ENCODE measurements at regions of chr11 and their contacts with region 1.

Region 1: GRCh38 chr11:36292311-36292722 is 3.1 kb upstream of the COMMD9 start:
- DNase-seq: no peak
- ATAC-seq: no peak
- H3K4me3 ChIP-seq: no peak overlapping the region
- H3K27ac ChIP-seq: no peak overlapping the region
- H3K4me1 ChIP-seq: no peaks in the 10 kb centered on the region
- H3K27me3 ChIP-seq: no peaks in the 10 kb centered on the region

Region 2: DNA sequence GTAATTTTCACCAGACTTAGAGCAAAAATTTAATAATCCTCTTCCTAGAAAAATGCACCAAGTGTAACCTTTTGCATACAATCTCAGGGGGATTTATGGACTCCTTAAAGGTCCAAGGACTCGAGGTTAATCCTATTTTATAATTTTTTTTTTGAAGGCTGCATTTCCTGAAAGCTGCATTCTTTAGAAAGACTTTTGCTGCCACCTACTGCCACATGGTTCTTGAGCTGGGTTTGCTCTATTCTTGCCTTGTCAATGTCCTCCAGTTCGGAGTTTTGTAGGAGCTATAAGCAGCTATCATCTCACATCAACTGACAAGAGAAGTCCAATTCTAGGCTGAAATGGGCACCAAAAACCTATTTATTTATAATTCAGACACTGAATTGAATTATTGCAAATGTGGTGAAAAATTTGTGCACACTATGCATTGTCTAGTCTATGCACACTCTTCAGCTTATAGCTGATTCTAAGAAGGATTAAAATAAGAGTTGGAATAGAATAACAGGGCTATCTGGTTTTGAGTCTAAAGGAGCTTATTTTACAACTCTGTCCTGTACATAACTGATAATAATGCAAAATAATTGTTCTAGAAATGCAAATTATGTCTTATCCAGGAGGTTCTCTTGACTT is 186.5 kb after region 1 on chr11:
- intact Hi-C with region 1: loop called (anchors 5 to 10 kb)
- DNase-seq: no peak
- ATAC-seq: peak; percentile 80
- H3K4me3 ChIP-seq: no peak overlapping the region
- H3K27ac ChIP-seq: no peak overlapping the region
- H3K4me1 ChIP-seq: no peaks in the 10 kb centered on the region
- H3K27me3 ChIP-seq: no peaks in the 10 kb centered on the region

Region 3: GRCh38 chr11:36492724-36493304 is 200.5 kb after region 1 on chr11:
- intact Hi-C with region 1: loop called in 1 of 2 experiments (anchors 5 kb)
- DNase-seq: no peak
- ATAC-seq: no peak
- H3K4me3 ChIP-seq: no peak overlapping the region
- H3K27ac ChIP-seq: no peak overlapping the region
- H3K4me1 ChIP-seq: no peaks in the 10 kb centered on the region
- H3K27me3 ChIP-seq: no peaks in the 10 kb centered on the region

Measured in aorta (tissue), 5 donors.